BJ (cell line): ENCODE measurements at regions of chr2 and their contacts with region 1.

Region 1: GRCh38 chr2:11583840-11584524 is 50.1 kb downstream of the GREB1 start:
- DNase-seq: peak; percentile 82
- H3K4me3 ChIP-seq: no peak overlapping the region
- H3K27me3 ChIP-seq: peaks cover 15% of the 10 kb centered on the region
- CTCF ChIP-seq: peak; percentile 87

Region 2: GRCh38 chr2:11465497-11466406 is 118.2 kb before region 1 on chr2 and contains the start of gene E2F6:
- CTCF ChIA-PET with region 1: interaction called, 18 read pairs
- POLR2A ChIA-PET with region 1: no interaction called
- DNase-seq: peak; percentile 44
- H3K4me3 ChIP-seq: peak within 1 kb of the TSS; percentile 66
- H3K27me3 ChIP-seq: no peaks in the 10 kb centered on the region
- CTCF ChIP-seq: no peak
- polyA plus RNA-seq, gene E2F6: 4.9 and 7.9 TPM in 2 replicates

Region 3: GRCh38 chr2:11491348-11491933 is 92.5 kb before region 1 on chr2:
- CTCF ChIA-PET with region 1: interaction called, 10 read pairs
- POLR2A ChIA-PET with region 1: no interaction called
- DNase-seq: no peak
- H3K4me3 ChIP-seq: no peak overlapping the region
- H3K27me3 ChIP-seq: peaks cover 3% of the 10 kb centered on the region
- CTCF ChIP-seq: no peak

Region 4: DNA sequence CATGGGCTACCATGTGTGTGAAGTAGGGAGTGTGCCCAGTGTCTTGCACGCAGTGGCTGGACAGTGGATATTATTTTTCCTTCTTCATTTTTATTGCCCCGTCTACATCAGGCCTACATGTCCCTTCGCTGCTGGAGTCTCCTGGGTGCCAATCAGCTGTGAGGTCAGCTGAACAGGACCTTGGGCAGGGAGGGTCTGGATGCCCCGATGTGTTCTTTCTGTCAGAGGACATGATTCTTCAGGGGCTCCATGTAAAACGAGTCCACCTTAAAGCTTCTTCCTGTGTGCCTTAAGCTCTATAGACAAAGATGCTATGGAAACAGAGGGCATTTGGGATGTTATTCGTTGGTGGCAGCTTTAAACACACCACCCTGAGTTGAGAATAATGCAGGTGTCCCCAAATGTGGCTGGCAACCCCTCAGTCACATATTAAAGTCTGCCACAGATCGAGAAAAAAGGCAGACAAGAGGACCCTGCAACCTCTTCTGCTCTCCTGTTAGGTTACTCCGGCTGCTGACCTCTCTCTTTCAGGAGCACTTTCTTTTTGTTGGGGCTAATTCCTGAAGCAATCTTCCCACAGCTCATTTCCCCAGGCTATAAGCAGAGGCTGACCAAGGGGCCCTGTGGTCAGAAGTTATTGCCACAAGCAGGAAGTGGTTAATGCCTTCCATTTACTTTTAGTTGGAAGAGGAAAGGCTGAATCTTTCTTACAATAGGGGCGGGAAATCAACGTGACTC is 30.2 kb before region 1 on chr2:
- CTCF ChIA-PET with region 1: interaction called, 14 read pairs
- POLR2A ChIA-PET with region 1: no interaction called
- DNase-seq: no peak
- H3K4me3 ChIP-seq: no peak overlapping the region
- H3K27me3 ChIP-seq: peaks cover 17% of the 10 kb centered on the region
- CTCF ChIP-seq: no peak

Region 5: GRCh38 chr2:11573418-11574175 is 10.4 kb before region 1 on chr2:
- CTCF ChIA-PET with region 1: interaction called, 36 read pairs
- POLR2A ChIA-PET with region 1: no interaction called
- DNase-seq: no peak
- H3K4me3 ChIP-seq: no peak overlapping the region
- H3K27me3 ChIP-seq: peaks cover 9% of the 10 kb centered on the region
- CTCF ChIP-seq: no peak

Region 6: GRCh38 chr2:11610624-11611242 is 26.8 kb after region 1 on chr2:
- CTCF ChIA-PET with region 1: interaction called, 28 read pairs
- POLR2A ChIA-PET with region 1: no interaction called
- DNase-seq: no peak
- H3K4me3 ChIP-seq: no peak overlapping the region
- H3K27me3 ChIP-seq: no peaks in the 10 kb centered on the region
- CTCF ChIP-seq: no peak